Vagina (tissue), 2 donors: ENCODE measurements at regions of chr12 and their contacts with region 1.

Region 1: DNA sequence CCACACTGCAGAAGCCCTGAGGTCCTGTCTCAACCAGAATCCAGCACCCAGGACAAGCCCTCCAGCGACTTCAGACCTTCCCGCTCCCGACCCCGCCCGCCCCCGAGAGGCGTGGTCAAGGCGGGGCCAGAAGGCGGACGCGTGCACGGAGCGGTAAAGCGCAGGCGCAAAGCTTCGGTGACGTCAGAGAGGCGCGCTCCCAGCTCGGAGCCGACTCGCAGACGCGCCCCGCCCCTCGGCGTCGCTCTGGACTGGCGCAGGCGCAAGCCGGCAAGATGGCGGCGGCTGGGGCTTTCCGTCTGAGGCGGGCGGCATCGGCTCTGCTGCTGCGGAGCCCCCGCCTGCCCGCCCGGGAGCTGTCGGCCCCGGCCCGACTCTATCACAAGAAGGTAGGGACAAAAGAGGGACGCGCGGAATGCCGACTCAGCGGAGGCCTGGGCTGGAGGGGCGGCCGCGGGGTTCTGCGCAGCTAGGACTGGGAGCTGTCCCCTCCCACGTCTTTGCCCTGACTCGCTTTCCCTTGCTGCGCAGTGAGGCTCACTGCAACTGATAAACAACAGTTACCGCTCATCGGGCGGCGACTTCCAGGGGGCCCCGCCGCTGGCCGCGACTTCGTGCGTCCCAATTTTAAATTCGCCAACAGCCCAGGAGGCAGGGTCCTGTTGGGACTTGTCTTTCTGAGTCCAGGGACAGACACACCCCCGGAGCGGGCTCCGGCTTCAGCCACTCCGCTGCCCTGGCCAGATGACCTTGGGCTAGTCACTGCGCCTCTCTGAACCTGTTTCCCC is at the start of gene ISCU:
- DNase-seq: peak; percentile 97 to 98
- H3K4me3 ChIP-seq: peak within 1 kb of the TSS; percentile 64 to 94
- H3K27ac ChIP-seq: peak within 1 kb of the TSS; percentile 94
- H3K4me1 ChIP-seq: peaks cover 67% of the 10 kb centered on the region
- H3K27me3 ChIP-seq: no peaks in the 10 kb centered on the region
- CTCF ChIP-seq: no peak
- POLR2A ChIP-seq: peak in 1 of 2 donors; percentile 91
- total RNA-seq, gene ISCU: 167 TPM

Region 2: DNA sequence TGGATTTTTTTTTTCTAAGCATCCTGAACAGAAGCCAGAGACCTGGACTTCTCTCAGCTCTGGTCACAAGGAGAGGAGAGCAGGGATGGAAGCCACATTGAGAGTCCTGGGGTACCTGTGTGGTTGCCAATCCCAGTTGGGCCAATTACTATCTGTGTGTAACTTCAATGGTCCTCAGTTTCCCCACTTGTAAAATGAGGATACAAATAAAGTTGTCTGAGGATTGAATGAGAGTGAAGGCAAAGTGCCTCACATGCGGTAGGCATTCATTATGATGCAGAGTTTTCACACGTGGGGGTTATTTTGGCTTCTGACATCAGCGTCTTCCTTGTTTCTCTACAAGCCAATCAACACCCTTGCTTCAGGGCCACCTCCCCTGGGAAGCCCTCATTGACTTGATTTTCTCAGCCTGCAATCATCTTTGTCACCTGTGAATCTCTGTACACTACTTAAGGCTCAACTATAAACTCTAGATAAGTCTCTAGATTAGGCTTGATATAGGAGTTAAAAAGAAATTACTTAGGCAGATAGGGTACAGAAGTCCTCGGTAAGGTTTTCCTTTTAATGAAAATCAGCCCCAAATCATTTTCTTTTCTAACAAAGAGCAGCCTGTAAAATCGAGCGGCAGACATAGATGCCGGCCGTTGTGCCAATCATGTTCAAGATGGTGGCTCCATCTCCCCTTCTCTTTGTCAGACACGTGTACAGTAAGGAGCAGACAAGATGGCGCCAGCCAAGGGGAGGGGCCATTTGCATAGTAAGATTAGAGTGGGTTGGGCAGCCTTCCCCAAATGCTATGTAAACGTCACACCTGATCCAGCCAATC is 85.3 kb before region 1 on chr12:
- intact Hi-C with region 1: no loop called
- DNase-seq: no peak
- H3K4me3 ChIP-seq: no peak overlapping the region
- H3K27ac ChIP-seq: no peak overlapping the region
- H3K4me1 ChIP-seq: no peaks in the 10 kb centered on the region
- H3K27me3 ChIP-seq: no peaks in the 10 kb centered on the region
- CTCF ChIP-seq: no peak
- POLR2A ChIP-seq: no peak

Region 3: DNA sequence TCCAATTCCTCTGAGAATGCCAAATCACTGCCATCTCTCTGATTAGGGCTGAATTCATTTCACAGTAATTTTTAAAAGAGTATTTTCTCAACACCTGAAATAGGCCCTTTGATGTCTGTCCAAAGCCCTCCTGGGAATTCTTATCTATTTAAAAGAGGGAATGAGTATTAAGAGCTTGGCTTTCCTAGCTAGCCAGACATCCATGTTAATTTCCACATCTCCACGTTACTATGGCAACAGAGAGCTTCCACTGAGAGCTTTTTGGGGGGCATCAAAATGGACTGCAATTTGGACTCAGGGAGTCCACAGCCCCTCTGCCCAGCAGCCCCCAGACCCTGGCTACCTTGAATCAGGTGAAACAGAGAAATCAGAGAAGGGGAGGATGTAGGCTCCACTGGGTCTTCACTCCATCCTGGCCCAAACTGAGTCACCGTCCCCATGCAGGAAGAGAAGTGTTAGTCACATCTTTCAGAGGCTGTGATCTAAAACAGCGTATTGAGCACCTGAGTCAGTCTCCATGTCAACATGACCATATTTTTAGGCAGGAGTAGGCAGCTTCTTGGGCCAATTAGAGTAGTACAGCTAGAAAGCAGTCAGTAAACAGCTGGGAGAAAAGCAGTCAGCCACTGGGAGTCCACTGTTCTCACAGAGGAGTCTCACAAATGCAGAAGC is 54.4 kb before region 1 on chr12:
- intact Hi-C with region 1: no loop called
- DNase-seq: no peak
- H3K4me3 ChIP-seq: no peak overlapping the region
- H3K27ac ChIP-seq: no peak overlapping the region
- H3K4me1 ChIP-seq: no peaks in the 10 kb centered on the region
- H3K27me3 ChIP-seq: no peaks in the 10 kb centered on the region
- CTCF ChIP-seq: no peak
- POLR2A ChIP-seq: no peak

Region 4: GRCh38 chr12:108618079-108618952 is 55.8 kb after region 1 on chr12:
- intact Hi-C with region 1: loop called (anchors 2 kb)
- DNase-seq: no peak
- H3K4me3 ChIP-seq: no peak overlapping the region
- H3K27ac ChIP-seq: no peak overlapping the region
- H3K4me1 ChIP-seq: peaks cover 10% of the 10 kb centered on the region
- H3K27me3 ChIP-seq: no peaks in the 10 kb centered on the region
- CTCF ChIP-seq: peak; percentile 95 to 98 (median 96)
- POLR2A ChIP-seq: no peak

Region 5: GRCh38 chr12:108803428-108804105 is 241.0 kb after region 1 on chr12:
- intact Hi-C with region 1: loop called (anchors 5 kb)
- DNase-seq: no peak
- H3K4me3 ChIP-seq: no peak overlapping the region
- H3K27ac ChIP-seq: peak overlapping the region; percentile 89
- H3K4me1 ChIP-seq: peaks cover 48% of the 10 kb centered on the region
- H3K27me3 ChIP-seq: no peaks in the 10 kb centered on the region
- CTCF ChIP-seq: peak; percentile 88 to 98 (median 97)
- POLR2A ChIP-seq: no peak

Region 6: DNA sequence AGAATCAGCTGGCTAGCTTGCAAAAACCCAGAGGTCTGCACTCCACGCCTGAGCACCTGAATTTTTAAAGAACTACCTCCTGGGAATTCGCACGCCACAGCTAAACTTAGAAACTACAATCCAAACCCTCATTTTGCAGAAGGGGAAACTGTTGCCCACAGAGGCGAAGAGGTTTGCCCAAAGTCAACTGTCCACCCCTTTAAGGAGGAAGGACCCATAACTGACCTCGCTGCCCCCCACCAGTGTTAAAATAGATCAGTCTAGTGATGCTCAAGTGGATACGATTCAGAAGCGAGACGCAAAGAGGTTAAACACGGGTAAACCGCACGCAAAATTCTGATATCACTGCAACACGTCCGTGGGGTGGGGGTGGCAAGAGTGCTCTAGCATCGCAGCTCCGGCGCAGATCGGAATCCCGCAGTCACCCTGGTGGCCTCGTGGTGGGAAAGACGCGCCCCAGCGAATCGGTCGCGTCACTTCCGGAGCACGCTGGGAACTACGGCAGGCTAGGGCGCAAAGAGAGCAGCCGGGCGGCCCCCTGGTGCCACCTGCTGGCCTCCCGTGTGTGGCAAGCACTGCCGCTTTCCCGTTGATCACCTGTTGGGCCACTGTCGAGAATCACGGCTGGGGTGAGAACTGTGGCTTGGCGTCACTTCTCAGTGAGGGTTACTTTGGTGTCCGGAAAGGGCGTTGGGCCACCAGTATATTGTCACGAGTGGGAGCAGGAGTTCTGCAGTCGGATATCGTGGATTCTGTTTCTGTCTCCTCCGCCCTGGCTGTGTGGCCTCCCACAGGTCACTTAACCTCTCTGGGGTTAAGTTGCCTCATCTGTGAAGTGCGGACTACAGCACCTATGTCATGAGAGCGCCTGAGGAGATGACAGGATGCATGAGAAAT is 530.7 kb after region 1 on chr12 and contains the start of gene ALKBH2:
- intact Hi-C with region 1: loop called (anchors 5 kb)
- DNase-seq: peak in 1 of 2 donors; percentile 93
- H3K4me3 ChIP-seq: peak within 1 kb of the TSS; percentile 58 to 60
- H3K27ac ChIP-seq: peak within 1 kb of the TSS; percentile 69
- H3K4me1 ChIP-seq: peaks cover 35% of the 10 kb centered on the region
- H3K27me3 ChIP-seq: no peaks in the 10 kb centered on the region
- CTCF ChIP-seq: peak; percentile 84 to 98 (median 98)
- POLR2A ChIP-seq: no peak
- total RNA-seq, gene ALKBH2: 14.5 TPM